Activated naive CD4-positive, alpha-beta T cell treated with anti-CD3 and anti-CD28 coated beads for 36 hours (primary cell): ENCODE measurements at regions of chr2 and their contacts with region 1.

Region 1: DNA sequence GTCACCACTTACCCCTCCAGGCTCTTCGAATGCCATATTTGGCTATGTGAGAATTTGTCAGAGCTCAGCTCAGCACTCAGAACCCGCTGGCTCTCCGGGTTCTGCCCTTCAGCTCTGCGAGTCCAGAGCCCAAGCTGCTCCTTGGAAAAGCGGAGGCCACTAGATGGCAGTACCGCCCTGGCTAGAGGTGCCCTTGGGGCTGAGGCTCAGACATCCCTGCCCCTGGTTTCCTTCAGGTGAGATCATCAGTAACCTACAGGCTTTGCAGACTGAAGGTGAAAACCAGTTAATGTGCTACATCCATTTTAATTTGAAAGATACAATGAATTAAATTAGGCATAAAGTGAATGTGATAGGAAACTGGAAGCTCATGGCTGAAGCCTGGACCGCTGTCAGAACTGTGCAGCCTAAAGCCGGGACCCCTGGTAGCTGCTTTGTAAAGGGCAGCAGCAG is 285.6 kb downstream of the AGAP1 start:
- DNase-seq: peak; percentile 80
- H3K4me3 Mint-ChIP-seq: no peak overlapping the region
- H3K27ac Mint-ChIP-seq: no peak overlapping the region
- H3K4me1 Mint-ChIP-seq: no peaks in the 10 kb centered on the region
- H3K27me3 Mint-ChIP-seq: peaks cover 29% of the 10 kb centered on the region

Region 2: GRCh38 chr2:234863043-234863934 is 916.2 kb before region 1 on chr2:
- CTCF ChIA-PET with region 1: no interaction called
- intact Hi-C with region 1: no loop called
- DNase-seq: no peak
- H3K4me3 Mint-ChIP-seq: no peak overlapping the region
- H3K27ac Mint-ChIP-seq: no peak overlapping the region
- H3K4me1 Mint-ChIP-seq: no peaks in the 10 kb centered on the region
- H3K27me3 Mint-ChIP-seq: peaks cover 2% of the 10 kb centered on the region

Region 3: DNA sequence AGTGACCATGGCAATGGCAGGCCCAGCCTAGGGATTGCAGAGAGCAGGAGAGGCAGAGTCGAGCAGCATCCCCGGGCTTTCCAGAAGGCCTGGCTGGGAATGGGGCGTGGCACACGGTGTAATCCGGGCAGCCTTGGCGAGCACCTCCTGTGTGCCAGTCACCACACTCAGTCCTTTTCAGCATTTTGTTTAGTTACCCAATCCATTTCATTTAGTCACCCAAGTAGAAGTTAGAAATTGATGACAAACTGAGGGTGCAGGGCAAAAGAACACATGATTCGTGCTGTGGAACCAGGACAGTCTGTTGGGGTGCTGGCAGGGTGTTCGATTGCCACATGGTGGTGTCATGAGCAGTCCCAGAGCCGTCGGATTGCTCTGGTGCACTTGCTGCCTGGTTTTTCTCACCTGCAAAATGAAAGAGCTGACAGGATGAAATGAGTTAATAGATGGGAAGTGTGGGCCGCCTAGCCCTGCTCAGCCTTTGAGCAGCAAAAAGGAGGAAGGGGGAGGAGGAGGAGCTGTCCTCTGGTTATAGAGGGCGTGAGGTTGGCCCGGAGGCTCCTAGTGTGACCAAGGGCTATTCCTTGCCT is 13.8 kb after region 1 on chr2:
- CTCF ChIA-PET with region 1: interaction called, 11 read pairs
- intact Hi-C with region 1: no loop called
- DNase-seq: peak; percentile 11
- H3K4me3 Mint-ChIP-seq: no peak overlapping the region
- H3K27ac Mint-ChIP-seq: no peak overlapping the region
- H3K4me1 Mint-ChIP-seq: no peaks in the 10 kb centered on the region
- H3K27me3 Mint-ChIP-seq: peaks cover 31% of the 10 kb centered on the region

Region 4: GRCh38 chr2:236049981-236050380 is 270.5 kb after region 1 on chr2:
- CTCF ChIA-PET with region 1: no interaction called
- intact Hi-C with region 1: loop called (anchors 5 kb)
- DNase-seq: no peak
- H3K4me3 Mint-ChIP-seq: no peak overlapping the region
- H3K27ac Mint-ChIP-seq: no peak overlapping the region
- H3K4me1 Mint-ChIP-seq: peaks cover 6% of the 10 kb centered on the region
- H3K27me3 Mint-ChIP-seq: peaks cover 17% of the 10 kb centered on the region